ENCODE measurements at regions of chr2 and their contacts with region 1.

Region 1: GRCh38 chr2:67397143-67397986 is at the start of gene ETAA1:
- DNase-seq: peak; percentile 86
- H3K4me3 ChIP-seq: peak within 1 kb of the TSS; percentile 90 to 95 (median 91)
- H3K27ac ChIP-seq: peak within 1 kb of the TSS; percentile 89
- H3K4me1 ChIP-seq: peaks cover 22% of the 10 kb centered on the region
- H3K27me3 ChIP-seq: no peaks in the 10 kb centered on the region
- CTCF ChIP-seq: no peak
- total RNA-seq, gene ETAA1: 14.0 to 14.5 TPM

Region 2: DNA sequence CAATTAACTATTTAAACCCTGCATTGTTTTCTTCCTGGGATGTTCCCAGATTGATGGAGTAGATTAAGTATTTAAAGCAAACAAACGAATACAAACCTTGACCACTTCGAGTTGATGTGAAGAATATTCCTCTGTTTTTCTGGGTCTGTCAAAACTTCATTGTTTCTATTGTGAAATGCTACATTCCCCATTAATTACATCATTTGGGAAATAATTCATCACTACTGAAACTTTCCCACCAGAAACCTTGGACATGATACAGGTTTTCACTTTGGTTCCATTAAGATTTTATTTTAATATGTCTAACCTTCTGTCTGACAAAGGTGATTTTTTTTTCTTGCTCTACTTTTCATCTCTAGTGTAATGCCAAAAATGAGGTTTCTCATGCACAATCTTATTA is 365.3 kb before region 1 on chr2:
- CTCF ChIA-PET with region 1: no interaction called
- dilution Hi-C with region 1: no loop called
- in situ Hi-C with region 1: no loop called
- intact Hi-C with region 1: no loop called
- DNase-seq: peak; percentile 23
- H3K4me3 ChIP-seq: no peak overlapping the region
- H3K27ac ChIP-seq: no peak overlapping the region
- H3K4me1 ChIP-seq: no peaks in the 10 kb centered on the region
- H3K27me3 ChIP-seq: no peaks in the 10 kb centered on the region
- CTCF ChIP-seq: no peak

Region 3: DNA sequence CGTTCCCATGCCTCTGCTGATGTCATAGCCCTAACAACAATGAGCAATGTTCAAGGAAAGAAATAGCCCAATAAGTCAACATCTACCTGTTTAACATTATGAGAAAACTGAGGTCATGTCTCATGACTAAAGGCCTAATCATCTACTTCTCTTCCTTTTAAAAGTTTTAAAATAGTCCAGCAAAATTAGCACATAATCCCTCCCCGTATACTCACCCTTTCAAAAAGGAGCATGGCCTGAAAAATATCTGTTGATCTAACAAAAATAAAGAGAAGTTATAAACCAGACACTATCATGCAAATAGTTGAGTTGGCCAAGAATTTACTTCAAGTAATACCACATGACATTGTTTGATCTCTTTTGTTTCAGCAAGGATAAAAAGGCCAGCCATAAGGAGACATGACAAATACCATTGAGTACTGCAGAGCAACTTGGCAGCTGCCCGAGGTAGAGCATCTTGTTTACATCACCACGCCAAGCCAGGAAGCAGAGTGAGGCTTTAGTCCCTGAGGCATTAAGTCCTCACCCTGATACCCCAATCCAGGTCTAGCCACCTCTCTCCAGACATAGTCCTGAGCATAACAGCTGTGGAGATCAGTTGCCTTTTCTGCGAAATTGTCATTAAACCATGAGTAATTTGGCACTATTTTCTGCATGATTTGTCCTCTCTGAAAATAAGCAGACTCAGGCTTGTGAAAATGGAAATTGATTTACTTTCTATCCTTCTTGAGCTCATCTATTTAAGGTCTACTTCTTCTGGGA is 137.6 kb before region 1 on chr2:
- CTCF ChIA-PET with region 1: no interaction called
- dilution Hi-C with region 1: no loop called
- in situ Hi-C with region 1: no loop called
- intact Hi-C with region 1: loop called (anchors 10 kb)
- DNase-seq: peak; percentile 91
- H3K4me3 ChIP-seq: no peak overlapping the region
- H3K27ac ChIP-seq: peak overlapping the region; percentile 81
- H3K4me1 ChIP-seq: peaks cover 40% of the 10 kb centered on the region
- H3K27me3 ChIP-seq: no peaks in the 10 kb centered on the region
- CTCF ChIP-seq: no peak

Region 4: GRCh38 chr2:67346718-67347407 is 50.5 kb before region 1 on chr2:
- CTCF ChIA-PET with region 1: no interaction called
- dilution Hi-C with region 1: no loop called
- in situ Hi-C with region 1: no loop called
- intact Hi-C with region 1: loop called (anchors 5 kb)
- DNase-seq: peak; percentile 75
- H3K4me3 ChIP-seq: no peak overlapping the region
- H3K27ac ChIP-seq: peak overlapping the region; percentile 29
- H3K4me1 ChIP-seq: peaks cover 12% of the 10 kb centered on the region
- H3K27me3 ChIP-seq: no peaks in the 10 kb centered on the region
- CTCF ChIP-seq: no peak

Region 5: GRCh38 chr2:67451086-67451832 is 53.9 kb after region 1 on chr2:
- CTCF ChIA-PET with region 1: no interaction called
- dilution Hi-C with region 1: no loop called
- in situ Hi-C with region 1: no loop called
- intact Hi-C with region 1: loop called (anchors 1 kb)
- DNase-seq: peak; percentile 100
- H3K4me3 ChIP-seq: no peak overlapping the region
- H3K27ac ChIP-seq: peak overlapping the region; percentile 95
- H3K4me1 ChIP-seq: peaks cover 61% of the 10 kb centered on the region
- H3K27me3 ChIP-seq: no peaks in the 10 kb centered on the region
- CTCF ChIP-seq: no peak